H1 (cell line): ENCODE measurements at regions of chr4 and their contacts with region 1.

Region 1: GRCh38 chr4:147731580-147732517 is at the start of gene ARHGAP10:
- DNase-seq: peak in 1 of 2 experiments; percentile 82
- H3K4me3 ChIP-seq: peak within 1 kb of the TSS; percentile 80 to 97 (median 88)
- H3K27ac ChIP-seq: no peak within 1 kb of the TSS
- H3K4me1 ChIP-seq: peaks cover 3 to 12% (median 7%) of the 10 kb centered on the region in 4 experiments; a peak in 5 of 7 replicates
- H3K27me3 ChIP-seq: peaks cover 3 to 37% (median 27%) of the 10 kb centered on the region in 4 experiments
- CTCF ChIP-seq: no peak
- EP300 ChIP-seq: no peak
- POLR2A ChIP-seq: peak in 1 of 2 experiments; percentile 44; a peak in 2 of 3 replicates
- RAD21 ChIP-seq: no peak
- total RNA-seq, gene ARHGAP10: 6.0 and 6.1 TPM in 2 replicates

Region 2: GRCh38 chr4:147453561-147454141 is 278.2 kb before region 1 on chr4:
- CTCF ChIA-PET with region 1: no interaction called
- POLR2A ChIA-PET with region 1: no interaction called
- DNase-seq: no peak
- H3K4me3 ChIP-seq: no peak overlapping the region
- H3K27ac ChIP-seq: no peak overlapping the region
- H3K4me1 ChIP-seq: no peaks in the 10 kb centered on the region
- H3K27me3 ChIP-seq: no peaks in the 10 kb centered on the region
- CTCF ChIP-seq: no peak
- EP300 ChIP-seq: no peak
- POLR2A ChIP-seq: no peak
- RAD21 ChIP-seq: no peak

Region 3: GRCh38 chr4:147683717-147684700 is 47.8 kb before region 1 on chr4 and contains the start of gene PRMT9:
- CTCF ChIA-PET with region 1: interaction called, 5 read pairs
- POLR2A ChIA-PET with region 1: interaction called, 11 read pairs
- DNase-seq: peak; percentile 49 to 93
- H3K4me3 ChIP-seq: peak within 1 kb of the TSS; percentile 68 to 83 (median 77)
- H3K27ac ChIP-seq: peak within 1 kb of the TSS; percentile 30; the same call in 1 of the 2 replicates
- H3K4me1 ChIP-seq: peaks cover 0 to 6% (median 3%) of the 10 kb centered on the region in 4 experiments; a peak in 4 of 7 replicates
- H3K27me3 ChIP-seq: no peaks in the 10 kb centered on the region
- CTCF ChIP-seq: no peak
- EP300 ChIP-seq: peak in 1 of 2 experiments; percentile 51; a peak in 1 of 3 replicates
- POLR2A ChIP-seq: peak; percentile 71 to 92
- RAD21 ChIP-seq: no peak
- total RNA-seq, gene PRMT9: 9.6 and 9.9 TPM in 2 replicates